ENCODE measurements at regions of chr6 and their contacts with region 1.

Region 1: GRCh38 chr6:161292145-161292544 is 18.3 kb upstream of the AGPAT4 start:
- DNase-seq: no peak
- ATAC-seq: no peak
- H3K4me3 ChIP-seq: no peak overlapping the region
- H3K27ac ChIP-seq: no peak overlapping the region
- H3K4me1 ChIP-seq: no peaks in the 10 kb centered on the region
- H3K27me3 ChIP-seq: no peaks in the 10 kb centered on the region
- CTCF ChIP-seq: no peak

Region 2: GRCh38 chr6:161151660-161152526 is 140.3 kb before region 1 on chr6:
- CTCF ChIA-PET with region 1: no interaction called
- POLR2A ChIA-PET with region 1: no interaction called
- intact Hi-C with region 1: no loop called
- DNase-seq: no peak
- ATAC-seq: no peak
- H3K4me3 ChIP-seq: no peak overlapping the region
- H3K27ac ChIP-seq: no peak overlapping the region
- H3K4me1 ChIP-seq: no peaks in the 10 kb centered on the region
- H3K27me3 ChIP-seq: no peaks in the 10 kb centered on the region
- CTCF ChIP-seq: no peak

Region 3: DNA sequence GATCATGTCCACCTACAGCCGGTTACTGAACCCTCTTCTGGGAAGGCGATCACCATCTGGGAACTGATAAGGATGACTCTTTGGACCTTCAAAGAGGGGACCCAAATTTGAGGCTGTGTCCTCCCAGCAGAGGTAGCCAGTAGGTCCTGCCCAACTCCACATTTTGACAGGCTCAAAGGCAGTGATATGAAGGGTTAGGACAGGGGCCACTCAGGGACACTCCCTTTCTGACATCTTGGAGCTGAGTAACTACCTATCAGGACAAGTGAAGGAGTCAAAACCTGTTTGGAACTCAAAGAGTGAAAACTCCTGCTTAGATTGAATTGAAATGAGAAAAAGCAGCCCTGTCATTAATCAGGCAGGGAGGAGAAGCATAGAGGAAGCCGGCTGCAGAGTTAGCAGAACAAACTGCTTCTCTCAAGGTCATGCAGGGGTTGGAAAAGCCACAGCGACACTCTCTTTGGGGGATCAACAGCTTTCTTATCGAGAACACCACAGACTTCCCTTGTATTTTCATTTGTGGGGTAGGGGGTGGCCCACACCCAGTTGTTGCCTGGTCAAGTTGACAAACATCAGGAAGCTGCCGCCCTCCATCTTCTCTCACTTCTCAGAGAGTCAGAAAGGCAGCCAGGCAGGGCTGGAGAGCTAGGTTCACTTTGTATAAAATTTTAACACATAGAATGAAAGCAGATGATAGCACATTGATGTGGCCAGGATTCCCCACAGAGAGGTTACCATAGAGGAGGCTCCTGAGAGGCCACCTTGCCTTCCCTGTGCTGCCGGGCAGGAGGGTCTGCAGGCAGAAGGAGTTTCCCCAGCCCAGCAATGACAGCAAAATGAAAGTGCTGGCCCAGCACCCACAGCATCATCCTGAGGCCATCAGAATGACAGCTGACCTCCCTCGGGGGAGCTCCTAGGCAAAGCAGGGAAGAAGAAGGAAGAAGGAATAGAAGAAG is 65.9 kb before region 1 on chr6:
- CTCF ChIA-PET with region 1: no interaction called
- POLR2A ChIA-PET with region 1: no interaction called
- intact Hi-C with region 1: no loop called
- DNase-seq: no peak
- ATAC-seq: no peak
- H3K4me3 ChIP-seq: no peak overlapping the region
- H3K27ac ChIP-seq: peak overlapping the region; percentile 70
- H3K4me1 ChIP-seq: peaks cover 15% of the 10 kb centered on the region
- H3K27me3 ChIP-seq: no peaks in the 10 kb centered on the region
- CTCF ChIP-seq: no peak

Region 4: GRCh38 chr6:161363286-161363685 is 71.1 kb after region 1 on chr6:
- CTCF ChIA-PET with region 1: no interaction called
- POLR2A ChIA-PET with region 1: interaction called, 11 read pairs
- intact Hi-C with region 1: no loop called
- DNase-seq: no peak
- ATAC-seq: no peak
- H3K4me3 ChIP-seq: no peak overlapping the region
- H3K27ac ChIP-seq: no peak overlapping the region
- H3K4me1 ChIP-seq: no peaks in the 10 kb centered on the region
- H3K27me3 ChIP-seq: no peaks in the 10 kb centered on the region
- CTCF ChIP-seq: no peak

Measured in PC-3 (cell line).